Gastrocnemius medialis (tissue), 4 donors: ENCODE measurements at regions of chr6 and their contacts with region 1.

Region 1: GRCh38 chr6:16128759-16129622 is at the start of gene MYLIP:
- DNase-seq: peak; percentile 98
- ATAC-seq: peak; percentile 76 to 81
- H3K4me3 ChIP-seq: peak within 1 kb of the TSS; percentile 92 to 99 (median 95)
- H3K27ac ChIP-seq: peak within 1 kb of the TSS; percentile 98 to 100 (median 99)
- H3K4me1 ChIP-seq: peaks cover 42 to 43% of the 10 kb centered on the region in 2 donors
- H3K27me3 ChIP-seq: no peaks in the 10 kb centered on the region
- CTCF ChIP-seq: peak; percentile 77 to 93 (median 78)
- POLR2A ChIP-seq: peak; percentile 100
- total RNA-seq, gene MYLIP: 8.9 to 28.6 (median 18.3) TPM

Region 2: DNA sequence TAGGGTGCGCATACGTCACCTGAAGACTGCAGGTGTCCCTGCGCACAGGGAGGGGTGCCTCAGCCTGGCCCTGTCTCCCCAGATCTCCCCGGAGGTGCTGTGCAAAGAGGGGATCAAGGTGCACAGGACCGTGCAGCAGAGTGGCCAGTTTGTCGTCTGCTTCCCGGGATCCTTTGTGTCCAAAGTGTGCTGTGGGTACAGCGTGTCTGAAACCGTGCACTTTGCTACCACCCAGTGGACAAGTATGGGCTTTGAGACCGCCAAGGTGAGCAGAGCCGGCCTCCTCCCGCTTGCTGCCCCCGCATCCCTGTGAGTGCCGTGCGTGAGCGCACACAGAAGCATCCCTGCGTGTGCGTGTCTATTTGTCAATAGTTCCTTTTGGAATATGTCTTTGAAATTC is 616.9 kb before region 1 on chr6:
- in situ Hi-C with region 1: no loop called
- intact Hi-C with region 1: loop called (anchors 5 kb)
- DNase-seq: peak in 1 of 2 donors; percentile 55
- ATAC-seq: peak in 1 of 2 donors; percentile 22
- H3K4me3 ChIP-seq: no peak overlapping the region
- H3K27ac ChIP-seq: peak overlapping the region; percentile 86 to 92 (median 88)
- H3K4me1 ChIP-seq: peaks cover 36 to 54% of the 10 kb centered on the region in 2 donors
- H3K27me3 ChIP-seq: no peaks in the 10 kb centered on the region
- CTCF ChIP-seq: peak; percentile 5 to 55 (median 41)
- POLR2A ChIP-seq: no peak

Region 3: GRCh38 chr6:15715060-15715459 is 413.9 kb before region 1 on chr6:
- in situ Hi-C with region 1: no loop called
- intact Hi-C with region 1: loop called (anchors 5 kb)
- DNase-seq: peak; percentile 6 to 40
- ATAC-seq: peak; percentile 70 to 79
- H3K4me3 ChIP-seq: no peak overlapping the region
- H3K27ac ChIP-seq: peak overlapping the region; percentile 44 to 80 (median 64)
- H3K4me1 ChIP-seq: peaks cover 29 to 30% of the 10 kb centered on the region in 2 donors
- H3K27me3 ChIP-seq: no peaks in the 10 kb centered on the region
- CTCF ChIP-seq: no peak
- POLR2A ChIP-seq: no peak

Region 4: GRCh38 chr6:16089232-16090062 is 39.5 kb before region 1 on chr6:
- in situ Hi-C with region 1: no loop called
- intact Hi-C with region 1: loop called (anchors 2 kb)
- DNase-seq: no peak
- ATAC-seq: peak; percentile 98
- H3K4me3 ChIP-seq: no peak overlapping the region
- H3K27ac ChIP-seq: peak overlapping the region; percentile 58 to 77 (median 64)
- H3K4me1 ChIP-seq: peaks cover 11 to 19% of the 10 kb centered on the region in 2 donors
- H3K27me3 ChIP-seq: no peaks in the 10 kb centered on the region
- CTCF ChIP-seq: no peak
- POLR2A ChIP-seq: no peak

Region 5: DNA sequence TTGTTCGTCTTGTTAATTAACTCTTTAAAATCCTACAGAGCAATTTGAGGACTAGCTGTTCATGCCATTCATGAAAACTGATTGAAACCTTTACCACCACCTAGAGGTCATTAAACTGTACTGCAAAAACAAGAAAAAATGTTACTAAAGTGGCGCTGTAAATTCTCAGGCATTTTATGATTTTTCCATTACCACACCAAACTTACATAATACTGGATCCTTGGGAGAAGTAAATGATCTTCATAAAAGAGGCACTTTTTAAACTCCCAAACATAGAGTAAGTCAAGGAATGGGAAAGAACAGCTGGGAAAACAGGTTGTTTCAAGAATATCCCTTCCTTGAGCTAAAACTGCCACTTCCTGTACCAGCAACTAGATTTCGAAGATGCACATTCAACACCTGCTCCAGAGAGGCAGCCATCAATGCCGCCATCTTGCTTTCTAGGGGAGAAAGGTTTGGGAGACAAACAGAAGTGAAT is 54.2 kb after region 1 on chr6:
- in situ Hi-C with region 1: no loop called
- intact Hi-C with region 1: loop called (anchors 2 kb)
- DNase-seq: no peak
- ATAC-seq: peak in 1 of 2 donors; percentile 60
- H3K4me3 ChIP-seq: peak overlapping the region in 1 of 4 donors; percentile 27
- H3K27ac ChIP-seq: peak overlapping the region in 2 of 4 donors; percentile 2 to 38
- H3K4me1 ChIP-seq: peaks cover 4 to 10% of the 10 kb centered on the region in 2 donors
- H3K27me3 ChIP-seq: no peaks in the 10 kb centered on the region
- CTCF ChIP-seq: peak; percentile 61 to 82 (median 70)
- POLR2A ChIP-seq: no peak

Region 6: GRCh38 chr6:16319813-16320532 is 191.0 kb after region 1 on chr6:
- in situ Hi-C with region 1: no loop called
- intact Hi-C with region 1: loop called (anchors 10 kb)
- DNase-seq: peak; percentile 92 to 96
- ATAC-seq: peak; percentile 73 to 74
- H3K4me3 ChIP-seq: peak overlapping the region; percentile 36 to 55 (median 50)
- H3K27ac ChIP-seq: peak overlapping the region; percentile 93 to 100 (median 96)
- H3K4me1 ChIP-seq: peaks cover 69 to 84% of the 10 kb centered on the region in 2 donors
- H3K27me3 ChIP-seq: no peaks in the 10 kb centered on the region
- CTCF ChIP-seq: no peak
- POLR2A ChIP-seq: peak in 1 of 2 donors; percentile 61